Pancreas (tissue), 10 donors: ENCODE measurements at regions of chr12 and their contacts with region 1.

Region 1: GRCh38 chr12:48629541-48629940 is 52.5 kb downstream of the KANSL2 start:
- DNase-seq: no peak
- ATAC-seq: no peak
- H3K4me3 ChIP-seq: no peak overlapping the region
- H3K27ac ChIP-seq: no peak overlapping the region
- H3K4me1 ChIP-seq: no peaks in the 10 kb centered on the region
- H3K27me3 ChIP-seq: no peaks in the 10 kb centered on the region
- CTCF ChIP-seq: no peak

Region 2: GRCh38 chr12:48336562-48336961 is 293.0 kb before region 1 on chr12:
- intact Hi-C with region 1: no loop called
- DNase-seq: no peak
- ATAC-seq: no peak
- H3K4me3 ChIP-seq: no peak overlapping the region
- H3K27ac ChIP-seq: no peak overlapping the region
- H3K4me1 ChIP-seq: no peaks in the 10 kb centered on the region
- H3K27me3 ChIP-seq: no peaks in the 10 kb centered on the region
- CTCF ChIP-seq: no peak

Region 3: GRCh38 chr12:48542300-48542928 is 87.1 kb before region 1 on chr12:
- intact Hi-C with region 1: loop called in 1 of 3 experiments (anchors 10 kb)
- DNase-seq: peak in 1 of 6 donors; percentile 24
- ATAC-seq: peak in 3 of 4 donors; percentile 56 to 72 (median 67)
- H3K4me3 ChIP-seq: no peak overlapping the region
- H3K27ac ChIP-seq: no peak overlapping the region
- H3K4me1 ChIP-seq: no peaks in the 10 kb centered on the region
- H3K27me3 ChIP-seq: no peaks in the 10 kb centered on the region
- CTCF ChIP-seq: peak in 2 of 4 donors; percentile 17 to 24